ENCODE measurements at regions of chr3 and their contacts with region 1.

Region 1: DNA sequence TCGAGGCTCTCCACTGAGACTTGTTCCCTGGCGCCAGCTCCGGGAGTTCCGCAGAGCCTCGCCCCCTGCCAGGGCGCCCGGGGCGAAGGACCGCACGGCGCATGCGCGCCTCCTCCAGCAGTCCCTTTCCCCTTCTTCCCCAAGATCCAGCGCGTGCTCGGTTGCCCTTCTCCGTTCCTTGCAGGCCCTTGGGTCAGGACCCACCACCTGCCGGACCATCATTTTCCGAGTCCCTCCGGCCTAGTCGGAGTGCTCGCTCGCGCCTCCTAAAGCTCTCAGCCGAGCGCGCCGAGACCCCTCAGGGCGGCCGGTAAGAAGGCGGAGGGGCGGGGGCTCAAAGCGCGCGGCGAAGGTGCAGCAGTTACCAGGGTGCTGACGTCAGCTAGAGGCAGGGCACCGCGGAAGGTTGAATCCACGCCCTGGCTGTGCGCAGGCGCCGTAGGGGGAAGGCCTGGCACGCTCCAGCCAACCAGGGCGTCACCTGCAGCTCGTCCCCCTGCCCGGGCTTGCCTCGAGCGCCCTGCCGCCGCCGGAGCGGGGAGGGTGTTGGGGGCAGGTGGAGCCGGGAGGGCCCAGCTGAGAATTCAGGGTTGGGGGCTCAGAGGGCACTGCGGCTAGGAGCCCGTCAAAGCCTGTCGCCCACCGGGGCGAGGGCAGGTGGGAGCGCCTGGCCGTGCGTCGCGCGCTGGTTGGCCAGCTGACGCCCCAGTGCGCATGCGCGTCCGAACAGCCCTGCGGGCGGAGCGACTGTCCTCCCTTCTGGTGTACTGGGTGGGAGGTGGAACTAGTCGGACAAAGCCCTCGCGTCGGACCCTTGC is at the start of gene TCAIM:
- DNase-seq: peak; percentile 82
- H3K4me3 ChIP-seq: peak within 1 kb of the TSS; percentile 57 to 91 (median 72)
- H3K27ac ChIP-seq: peak within 1 kb of the TSS; percentile 93 to 99 (median 98)
- H3K4me1 ChIP-seq: peaks cover 0 to 40% (median 4%) of the 10 kb centered on the region in 3 donors
- H3K27me3 ChIP-seq: peaks cover 0 to 9% (median 0%) of the 10 kb centered on the region in 4 donors
- CTCF ChIP-seq: no peak
- POLR2A ChIP-seq: peak in 3 of 4 donors; percentile 73 to 86 (median 84)
- total RNA-seq, gene TCAIM: 15.6 to 25.0 (median 22.6) TPM

Region 2: DNA sequence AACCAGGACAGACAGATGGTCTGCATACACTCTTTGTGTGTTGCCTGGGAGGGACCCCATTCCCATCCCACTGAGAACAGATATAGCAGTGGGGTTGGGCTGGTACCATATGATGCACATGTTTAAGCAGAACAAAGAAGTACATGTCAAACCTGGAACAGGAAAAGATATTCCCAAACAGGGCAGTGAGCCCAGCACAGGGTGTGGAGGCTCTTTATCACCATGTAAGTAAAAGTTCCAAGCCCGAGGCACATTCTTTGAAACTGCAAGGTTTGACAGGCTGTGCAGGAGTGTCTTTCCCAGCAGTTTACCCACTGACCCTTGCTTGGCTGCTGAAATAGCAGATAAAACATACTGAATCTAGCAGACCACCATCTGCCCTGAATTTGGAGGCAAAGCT is 144.5 kb after region 1 on chr3:
- intact Hi-C with region 1: loop called (anchors 10 kb)
- DNase-seq: no peak
- H3K4me3 ChIP-seq: no peak overlapping the region
- H3K27ac ChIP-seq: no peak overlapping the region
- H3K4me1 ChIP-seq: peaks cover 0 to 17% (median 5%) of the 10 kb centered on the region in 3 donors
- H3K27me3 ChIP-seq: no peaks in the 10 kb centered on the region
- CTCF ChIP-seq: no peak
- POLR2A ChIP-seq: no peak

Region 3: GRCh38 chr3:44861412-44862220 is 523.4 kb after region 1 on chr3 and contains the start of gene TMEM42:
- intact Hi-C with region 1: loop called (anchors 10 kb)
- DNase-seq: peak; percentile 24
- H3K4me3 ChIP-seq: peak within 1 kb of the TSS; percentile 68 to 95 (median 76)
- H3K27ac ChIP-seq: peak within 1 kb of the TSS; percentile 92 to 97 (median 94)
- H3K4me1 ChIP-seq: peaks cover 6 to 21% (median 7%) of the 10 kb centered on the region in 3 donors
- H3K27me3 ChIP-seq: no peaks in the 10 kb centered on the region
- CTCF ChIP-seq: peak in 2 of 6 experiments; percentile 9
- POLR2A ChIP-seq: peak in 3 of 4 donors; percentile 50 to 86 (median 67)
- total RNA-seq, gene TMEM42: 4.3 to 9.2 (median 7.0) TPM